Psoas muscle (tissue), 8 donors: ENCODE measurements at regions of chr15 and their contacts with region 1.

Region 1: DNA sequence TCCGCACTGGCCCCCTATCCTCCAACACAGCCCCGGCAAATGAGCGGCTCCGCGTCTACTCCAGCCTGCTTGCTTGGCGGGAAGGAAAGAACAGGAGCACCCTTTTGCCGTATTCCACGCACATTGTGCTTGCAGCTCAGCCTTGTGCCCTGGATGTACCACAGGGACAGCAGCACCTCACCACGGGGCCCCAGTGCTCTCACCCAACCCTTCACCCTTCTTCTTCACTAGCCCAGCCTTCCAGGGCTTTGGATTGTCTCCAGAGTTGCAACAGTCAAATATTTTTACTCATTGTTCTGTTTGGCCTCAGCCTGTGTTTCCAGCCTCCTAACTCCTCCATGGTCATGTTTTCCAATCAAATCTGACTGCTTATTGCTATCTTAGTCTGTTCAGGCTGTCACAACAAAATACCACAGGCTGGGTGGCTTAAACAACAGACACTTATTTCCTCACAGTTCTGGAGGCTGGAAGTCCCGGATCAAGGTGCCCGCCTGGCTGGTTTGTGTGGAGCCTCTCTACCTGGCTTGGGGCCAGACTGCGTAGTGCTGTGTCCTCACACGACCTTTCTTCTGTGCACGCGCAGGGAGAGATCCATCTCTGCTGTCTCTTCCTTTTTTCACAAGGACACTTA is 79.2 kb upstream of the ABHD17C start:
- DNase-seq: peak; percentile 57 to 68
- ATAC-seq: peak; percentile 30 to 66 (median 43)
- H3K4me3 ChIP-seq: no peak overlapping the region
- H3K27ac ChIP-seq: no peak overlapping the region
- H3K4me1 ChIP-seq: peaks cover 4% of the 10 kb centered on the region
- H3K27me3 ChIP-seq: no peaks in the 10 kb centered on the region
- CTCF ChIP-seq: no peak

Region 2: DNA sequence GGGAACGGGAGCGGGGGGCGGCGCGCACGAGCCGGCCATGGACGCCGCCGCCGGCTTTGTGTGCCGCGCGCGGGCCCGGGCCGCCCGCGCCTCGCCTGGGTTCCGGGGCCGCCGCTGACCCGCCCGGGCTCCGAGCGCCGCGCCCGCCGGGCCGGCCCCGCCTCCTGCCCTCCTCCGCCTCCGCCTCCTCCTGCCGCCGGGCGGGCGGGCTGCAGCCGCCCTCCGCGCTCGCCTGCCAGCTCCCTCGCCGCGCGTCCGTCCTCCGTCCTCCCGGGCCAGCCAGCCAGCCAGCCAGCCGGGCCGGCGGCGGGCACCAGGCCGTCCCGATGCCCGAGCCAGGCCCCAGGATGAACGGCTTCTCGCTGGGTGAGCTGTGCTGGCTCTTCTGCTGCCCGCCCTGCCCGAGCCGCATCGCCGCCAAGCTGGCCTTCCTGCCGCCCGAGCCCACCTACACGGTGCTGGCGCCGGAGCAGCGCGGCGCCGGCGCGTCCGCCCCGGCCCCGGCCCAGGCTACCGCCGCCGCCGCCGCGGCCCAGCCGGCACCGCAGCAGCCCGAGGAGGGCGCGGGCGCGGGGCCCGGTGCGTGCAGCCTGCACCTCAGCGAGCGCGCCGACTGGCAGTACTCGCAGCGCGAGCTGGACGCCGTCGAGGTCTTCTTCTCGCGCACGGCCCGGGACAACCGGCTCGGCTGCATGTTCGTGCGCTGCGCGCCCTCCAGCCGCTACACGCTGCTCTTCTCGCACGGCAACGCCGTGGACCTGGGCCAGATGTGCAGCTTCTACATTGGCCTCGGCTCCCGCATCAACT is 79.4 kb after region 1 on chr15 and contains the start of gene ABHD17C:
- intact Hi-C with region 1: loop called in 1 of 2 experiments (anchors 2 kb)
- DNase-seq: peak; percentile 65 to 76
- ATAC-seq: peak; percentile 70 to 80 (median 78)
- H3K4me3 ChIP-seq: peak within 1 kb of the TSS; percentile 78
- H3K27ac ChIP-seq: peak within 1 kb of the TSS; percentile 83
- H3K4me1 ChIP-seq: peaks cover 11% of the 10 kb centered on the region
- H3K27me3 ChIP-seq: no peaks in the 10 kb centered on the region
- CTCF ChIP-seq: no peak
- total RNA-seq, gene ABHD17C: 1.1 to 2.9 (median 2.1) TPM